Activated CD4-positive, alpha-beta memory T cell treated with anti-CD3 and anti-CD28 coated beads, Interleukin-2, amount 10 ng/mL, durations not matched to agents 7 days and 5 days (primary cell): ENCODE measurements at regions of chr10 and their contacts with region 1.

Region 1: DNA sequence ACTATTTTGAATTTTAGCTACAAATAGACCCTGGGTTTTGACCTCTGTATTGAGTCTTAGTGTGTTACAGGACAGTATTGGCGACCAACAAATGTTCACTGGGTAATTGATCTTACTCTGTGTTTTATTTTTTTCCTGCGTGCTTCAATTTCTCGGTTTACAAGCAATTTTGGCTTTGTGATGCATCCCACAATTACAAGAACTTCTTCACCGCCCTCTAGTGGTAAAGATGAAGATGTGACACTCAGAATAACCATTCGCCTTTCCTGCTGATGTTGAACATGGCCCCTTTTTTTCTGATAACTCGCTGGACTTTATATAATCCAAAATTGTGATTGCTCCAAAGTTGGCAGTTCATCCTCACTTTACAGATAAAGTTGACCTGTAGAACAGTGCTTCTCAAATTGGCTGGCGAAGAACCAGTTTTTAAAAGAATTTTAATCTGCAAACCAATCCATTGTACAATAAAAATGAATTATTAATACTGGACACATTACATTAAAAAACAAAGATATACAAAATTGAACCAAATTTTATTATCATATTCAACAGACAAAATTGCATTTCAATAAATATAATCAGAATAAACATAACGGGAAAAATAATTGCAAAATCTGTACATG is 20.2 kb upstream of the SMC3 start:
- DNase-seq: no peak
- H3K4me3 Mint-ChIP-seq: no peak overlapping the region
- H3K27ac Mint-ChIP-seq: no peak overlapping the region
- H3K4me1 Mint-ChIP-seq: peaks cover 10% of the 10 kb centered on the region
- H3K27me3 Mint-ChIP-seq: peaks cover 25% of the 10 kb centered on the region

Region 2: DNA sequence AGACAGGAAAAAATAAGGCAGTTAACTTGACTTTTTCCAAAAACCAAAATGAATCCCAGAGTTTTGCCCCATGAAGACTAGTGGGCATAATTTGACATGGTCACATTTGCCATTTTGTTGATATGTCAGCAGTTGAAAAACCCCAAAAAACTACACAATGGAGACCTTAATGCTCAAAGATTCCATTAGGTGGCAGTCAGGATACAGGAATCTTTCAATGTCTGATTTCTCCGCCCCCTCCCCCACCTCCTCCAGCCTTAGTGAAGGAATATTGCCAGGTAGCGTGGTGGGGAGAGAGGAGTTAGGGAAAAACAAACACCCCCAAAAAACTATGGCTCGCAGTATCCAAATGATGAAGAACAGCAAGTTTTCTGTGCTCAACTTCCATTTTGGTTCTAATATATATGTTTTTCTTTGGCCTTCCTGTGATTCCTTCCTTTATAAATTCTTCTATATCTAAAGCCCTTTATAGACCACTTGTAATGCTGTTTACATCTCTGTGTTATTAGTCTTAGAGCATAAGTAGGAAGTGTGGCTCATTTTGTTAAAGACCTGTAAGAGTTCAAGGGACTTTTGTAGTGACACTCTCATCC is 235.8 kb before region 1 on chr10:
- CTCF ChIA-PET with region 1: interaction called, 67 read pairs
- POLR2A ChIA-PET with region 1: interaction called, 3 read pairs
- DNase-seq: peak; percentile 50
- H3K4me3 Mint-ChIP-seq: no peak overlapping the region
- H3K27ac Mint-ChIP-seq: no peak overlapping the region
- H3K4me1 Mint-ChIP-seq: peaks cover 33% of the 10 kb centered on the region
- H3K27me3 Mint-ChIP-seq: peaks cover 3% of the 10 kb centered on the region

Region 3: DNA sequence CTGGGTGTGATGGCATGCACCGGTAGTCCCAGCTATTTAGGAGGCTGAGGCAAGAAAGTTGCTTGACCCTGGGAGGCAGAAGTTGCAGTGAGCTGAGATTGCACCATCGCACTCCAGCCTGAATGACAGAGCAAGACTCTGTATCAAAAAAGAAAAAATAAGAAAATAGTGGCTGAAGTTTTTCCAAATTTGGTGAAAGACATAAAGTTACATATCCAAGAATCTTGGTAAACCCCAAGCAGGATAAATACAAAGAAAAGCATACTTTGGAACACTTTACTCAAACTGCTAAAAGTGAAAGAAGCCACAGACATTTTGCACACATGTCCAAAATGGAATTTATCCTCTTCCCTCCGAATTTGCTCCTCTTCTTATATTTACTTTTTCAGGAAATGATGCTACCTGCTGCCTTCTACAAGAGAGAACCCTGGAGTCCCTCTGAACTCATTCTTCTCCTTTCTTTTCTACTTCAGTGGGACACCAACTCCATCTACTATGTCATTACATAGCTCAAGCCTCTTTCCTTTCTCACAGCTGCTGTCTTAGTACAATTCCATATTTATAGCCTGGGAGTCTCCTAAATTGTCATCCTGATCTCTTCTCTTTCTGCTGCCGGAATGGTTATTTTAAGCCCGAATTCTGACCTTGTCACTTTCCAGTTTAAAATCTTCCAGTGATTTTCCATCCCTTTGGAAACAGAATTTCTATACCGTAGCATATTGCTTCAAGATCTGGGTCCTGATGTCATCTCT is 225.2 kb before region 1 on chr10:
- CTCF ChIA-PET with region 1: interaction called, 13 read pairs
- POLR2A ChIA-PET with region 1: no interaction called
- DNase-seq: no peak
- H3K4me3 Mint-ChIP-seq: no peak overlapping the region
- H3K27ac Mint-ChIP-seq: no peak overlapping the region
- H3K4me1 Mint-ChIP-seq: peaks cover 42% of the 10 kb centered on the region
- H3K27me3 Mint-ChIP-seq: peaks cover under 1% of the 10 kb centered on the region

Region 4: GRCh38 chr10:110664483-110665420 is 117.5 kb after region 1 on chr10:
- CTCF ChIA-PET with region 1: no interaction called
- POLR2A ChIA-PET with region 1: no interaction called
- DNase-seq: no peak
- H3K4me3 Mint-ChIP-seq: no peak overlapping the region
- H3K27ac Mint-ChIP-seq: no peak overlapping the region
- H3K4me1 Mint-ChIP-seq: peaks cover 10% of the 10 kb centered on the region
- H3K27me3 Mint-ChIP-seq: peaks cover 21% of the 10 kb centered on the region

Region 5: GRCh38 chr10:111077785-111078504 is 530.7 kb after region 1 on chr10:
- CTCF ChIA-PET with region 1: no interaction called
- POLR2A ChIA-PET with region 1: no interaction called
- DNase-seq: no peak
- H3K4me3 Mint-ChIP-seq: peak overlapping the region; percentile 14
- H3K27ac Mint-ChIP-seq: no peak overlapping the region
- H3K4me1 Mint-ChIP-seq: peaks cover 11% of the 10 kb centered on the region
- H3K27me3 Mint-ChIP-seq: peaks cover 58% of the 10 kb centered on the region